HepG2 (cell line): ENCODE measurements at regions of chr2 and their contacts with region 1.

Region 1: DNA sequence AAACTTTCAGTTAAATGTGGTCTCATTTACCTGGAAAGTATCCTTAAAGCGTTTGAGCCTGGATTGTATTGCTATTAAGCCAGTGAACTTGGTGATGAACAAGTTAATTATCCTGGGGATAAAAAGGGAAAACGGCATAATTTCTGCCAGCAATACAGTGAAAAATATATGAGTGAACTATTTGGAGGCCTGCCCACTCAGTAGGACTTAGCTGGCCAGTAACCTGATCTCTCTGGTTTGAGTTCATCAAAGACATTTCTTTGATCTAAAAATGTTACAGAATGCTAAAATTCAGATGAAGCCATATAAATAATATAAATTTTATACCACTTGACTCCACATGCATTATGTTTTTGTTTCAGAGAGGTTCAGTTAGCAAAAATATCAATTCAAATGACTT is 241.1 kb upstream of the VWC2L start:
- DNase-seq: no peak
- ATAC-seq: no peak
- H3K4me3 ChIP-seq: no peak overlapping the region
- H3K27ac ChIP-seq: no peak overlapping the region
- H3K4me1 ChIP-seq: no peaks in the 10 kb centered on the region
- H3K27me3 ChIP-seq: no peaks in the 10 kb centered on the region
- CTCF ChIP-seq: no peak
- EP300 ChIP-seq: no peak
- POLR2A ChIP-seq: no peak
- RAD21 ChIP-seq: no peak

Region 2: DNA sequence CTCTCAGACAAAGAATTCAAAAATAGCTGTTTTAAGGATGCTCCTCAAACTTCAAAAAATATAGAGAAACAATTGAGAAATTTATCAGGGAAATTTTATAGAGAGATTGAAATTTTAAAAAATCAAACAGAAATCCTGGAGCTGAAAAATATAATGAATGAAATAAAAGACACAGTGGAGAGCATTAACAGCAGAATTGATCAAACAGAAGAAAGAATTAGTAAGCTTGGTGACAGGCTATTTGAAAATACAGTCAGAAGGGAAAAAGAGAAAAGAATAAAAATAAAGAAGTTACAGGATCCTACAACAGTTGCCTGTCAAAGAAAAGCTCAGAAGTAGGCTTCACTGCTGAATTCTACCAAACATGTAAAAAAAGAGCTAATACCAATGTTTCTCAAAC is 52.7 kb before region 1 on chr2:
- CTCF ChIA-PET with region 1: no interaction called
- POLR2A ChIA-PET with region 1: no interaction called
- in situ Hi-C with region 1: no loop called
- intact Hi-C with region 1: loop called (anchors 1 kb)
- DNase-seq: no peak
- ATAC-seq: no peak
- H3K4me3 ChIP-seq: no peak overlapping the region
- H3K27ac ChIP-seq: no peak overlapping the region
- H3K4me1 ChIP-seq: no peaks in the 10 kb centered on the region
- H3K27me3 ChIP-seq: no peaks in the 10 kb centered on the region
- CTCF ChIP-seq: no peak
- EP300 ChIP-seq: no peak
- POLR2A ChIP-seq: no peak
- RAD21 ChIP-seq: no peak